ENCODE measurements at regions of chr14 and their contacts with region 1.

Region 1: GRCh38 chr14:67487937-67488893 is at the start of gene TMEM229B:
- DNase-seq: peak; percentile 84
- ATAC-seq: peak; percentile 85
- H3K4me3 Mint-ChIP-seq: peak within 1 kb of the TSS; percentile 88
- H3K27ac Mint-ChIP-seq: peak within 1 kb of the TSS; percentile 99
- H3K4me1 Mint-ChIP-seq: peaks cover 85% of the 10 kb centered on the region
- H3K27me3 Mint-ChIP-seq: no peaks in the 10 kb centered on the region
- CTCF ChIP-seq: no peak
- total RNA-seq, gene TMEM229B: 3.3 and 3.7 TPM in 2 replicates

Region 2: DNA sequence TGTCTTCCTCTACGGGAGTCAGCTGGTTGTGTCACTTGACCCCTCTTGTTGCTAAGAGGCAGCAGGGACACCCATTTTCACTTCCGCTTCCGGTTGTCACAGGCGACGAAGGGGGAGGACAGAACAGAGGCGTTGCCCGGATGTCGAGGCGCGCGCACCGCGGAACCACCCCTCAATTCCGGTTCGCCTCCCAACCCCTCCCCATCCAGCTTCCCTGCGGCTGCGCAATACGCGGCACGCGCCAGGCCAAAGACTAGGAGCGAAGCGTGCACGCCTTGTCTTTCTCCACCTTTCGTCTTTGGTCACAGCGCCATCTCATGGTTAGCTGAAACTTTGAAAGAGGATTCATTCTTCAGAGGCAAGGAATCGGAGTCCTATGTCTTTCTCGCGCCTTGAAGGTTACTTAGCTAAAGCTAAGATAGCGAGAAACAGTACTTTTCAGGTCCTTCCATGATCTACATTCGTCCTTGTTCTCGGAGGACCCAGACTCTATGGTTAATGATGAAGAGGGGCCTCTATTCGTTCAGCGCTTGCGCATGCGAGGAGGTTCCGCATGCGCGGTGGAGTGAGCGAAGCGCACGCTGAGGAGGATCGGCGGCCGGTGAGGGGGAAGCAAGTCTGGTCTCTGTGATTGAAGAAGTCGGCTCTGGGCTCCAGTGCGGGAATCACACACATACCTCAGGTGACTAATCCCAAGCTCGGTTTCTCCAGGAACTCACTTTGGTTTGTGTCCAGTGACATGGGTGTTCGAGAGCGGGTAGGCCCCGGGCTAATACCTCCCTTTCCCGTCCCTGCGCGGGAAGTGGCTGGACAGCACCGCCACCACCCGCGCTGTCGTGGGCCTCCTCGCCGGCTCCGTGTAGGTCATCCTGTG is 128.2 kb before region 1 on chr14 and contains the starts of genes ATP6V1D and EIF2S1:
- CTCF ChIA-PET with region 1: interaction called, 4 read pairs
- POLR2A ChIA-PET with region 1: interaction called, 7 read pairs
- intact Hi-C with region 1: loop called (anchors 1 kb)
- DNase-seq: peak; percentile 97
- ATAC-seq: peak; percentile 91
- H3K4me3 Mint-ChIP-seq: peak within 1 kb of the TSS; percentile 99
- H3K27ac Mint-ChIP-seq: peak within 1 kb of the TSS; percentile 97
- H3K4me1 Mint-ChIP-seq: peaks cover 60% of the 10 kb centered on the region
- H3K27me3 Mint-ChIP-seq: no peaks in the 10 kb centered on the region
- CTCF ChIP-seq: peak; percentile 95
- total RNA-seq, gene ATP6V1D: 27.8 and 29.4 TPM in 2 replicates
- total RNA-seq, gene EIF2S1: 84.4 and 96.7 TPM in 2 replicates

Region 3: DNA sequence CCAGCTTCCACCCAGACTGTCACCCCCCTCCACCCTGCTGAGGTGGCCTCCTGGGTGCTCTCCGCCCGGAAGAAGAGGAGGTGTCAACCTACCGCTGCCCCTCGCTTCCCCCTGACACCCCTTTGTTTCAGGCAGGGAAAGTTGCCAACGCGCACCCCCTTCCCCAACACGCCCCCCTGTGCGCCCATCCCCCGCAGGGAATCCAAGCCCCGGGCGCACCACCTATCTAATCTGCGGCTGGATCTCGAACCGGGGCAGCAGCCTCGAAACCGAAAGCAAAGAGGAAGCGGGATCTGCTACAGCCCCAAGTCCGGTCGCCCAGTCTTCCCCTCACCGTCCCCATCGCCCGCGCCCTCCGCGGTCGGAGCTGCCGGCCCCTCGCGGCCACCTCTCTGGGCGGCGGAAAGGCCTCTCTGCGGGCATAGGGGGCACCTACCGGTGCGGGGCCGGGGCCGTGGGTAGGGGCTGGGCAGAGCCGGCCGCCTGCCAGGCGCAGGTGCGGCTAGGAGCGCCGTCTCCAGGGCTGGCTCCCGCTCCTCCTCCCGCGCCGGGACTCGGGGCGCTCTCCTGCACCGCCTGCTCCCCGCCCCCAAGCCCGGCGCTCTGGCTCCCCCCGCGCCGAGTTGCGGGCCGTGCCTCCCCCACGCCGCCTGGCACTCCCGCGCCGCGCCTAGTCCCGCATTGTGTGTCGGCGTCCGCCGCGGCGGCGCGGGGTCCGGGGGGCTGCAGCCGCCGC is 26.6 kb after region 1 on chr14:
- CTCF ChIA-PET with region 1: interaction called, 10 read pairs
- POLR2A ChIA-PET with region 1: interaction called, 15 read pairs
- intact Hi-C with region 1: loop called (anchors 1 kb)
- DNase-seq: peak; percentile 53
- ATAC-seq: peak; percentile 53
- H3K4me3 Mint-ChIP-seq: peak overlapping the region; percentile 88
- H3K27ac Mint-ChIP-seq: peak overlapping the region; percentile 85
- H3K4me1 Mint-ChIP-seq: peaks cover 41% of the 10 kb centered on the region
- H3K27me3 Mint-ChIP-seq: no peaks in the 10 kb centered on the region
- CTCF ChIP-seq: no peak

Region 4: DNA sequence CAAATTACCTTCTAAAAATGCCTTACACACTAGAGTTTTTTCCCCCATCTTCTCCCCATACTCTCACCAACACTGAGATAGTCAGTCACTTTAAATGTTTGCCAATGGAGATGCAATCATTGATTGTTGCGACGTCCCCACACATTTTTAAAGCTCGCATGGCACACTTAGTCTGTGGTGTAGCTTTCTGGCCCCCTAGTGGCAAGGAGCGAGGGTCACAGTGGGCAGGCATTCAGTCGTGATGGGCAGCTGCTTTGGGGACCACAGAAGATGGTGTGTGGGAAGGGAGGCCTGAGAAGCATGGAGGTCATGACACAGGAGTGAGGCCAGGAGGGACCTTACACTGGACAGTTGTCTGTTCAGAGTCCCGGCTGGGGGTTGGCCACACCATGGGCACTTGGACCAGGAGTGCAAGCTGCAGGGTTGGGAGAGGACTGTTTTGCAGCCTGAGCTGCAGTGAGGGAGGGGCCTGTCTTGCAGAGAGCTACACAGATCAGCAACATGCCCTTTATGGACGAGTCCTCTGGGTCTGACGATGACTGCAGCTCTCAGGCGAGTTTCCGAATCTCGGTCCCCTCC is 83.1 kb after region 1 on chr14:
- CTCF ChIA-PET with region 1: interaction called, 21 read pairs
- POLR2A ChIA-PET with region 1: interaction called, 5 read pairs
- intact Hi-C with region 1: no loop called
- DNase-seq: peak; percentile 55
- ATAC-seq: peak; percentile 86
- H3K4me3 Mint-ChIP-seq: no peak overlapping the region
- H3K27ac Mint-ChIP-seq: no peak overlapping the region
- H3K4me1 Mint-ChIP-seq: peaks cover 3% of the 10 kb centered on the region
- H3K27me3 Mint-ChIP-seq: peaks cover 8% of the 10 kb centered on the region
- CTCF ChIP-seq: no peak

Region 5: DNA sequence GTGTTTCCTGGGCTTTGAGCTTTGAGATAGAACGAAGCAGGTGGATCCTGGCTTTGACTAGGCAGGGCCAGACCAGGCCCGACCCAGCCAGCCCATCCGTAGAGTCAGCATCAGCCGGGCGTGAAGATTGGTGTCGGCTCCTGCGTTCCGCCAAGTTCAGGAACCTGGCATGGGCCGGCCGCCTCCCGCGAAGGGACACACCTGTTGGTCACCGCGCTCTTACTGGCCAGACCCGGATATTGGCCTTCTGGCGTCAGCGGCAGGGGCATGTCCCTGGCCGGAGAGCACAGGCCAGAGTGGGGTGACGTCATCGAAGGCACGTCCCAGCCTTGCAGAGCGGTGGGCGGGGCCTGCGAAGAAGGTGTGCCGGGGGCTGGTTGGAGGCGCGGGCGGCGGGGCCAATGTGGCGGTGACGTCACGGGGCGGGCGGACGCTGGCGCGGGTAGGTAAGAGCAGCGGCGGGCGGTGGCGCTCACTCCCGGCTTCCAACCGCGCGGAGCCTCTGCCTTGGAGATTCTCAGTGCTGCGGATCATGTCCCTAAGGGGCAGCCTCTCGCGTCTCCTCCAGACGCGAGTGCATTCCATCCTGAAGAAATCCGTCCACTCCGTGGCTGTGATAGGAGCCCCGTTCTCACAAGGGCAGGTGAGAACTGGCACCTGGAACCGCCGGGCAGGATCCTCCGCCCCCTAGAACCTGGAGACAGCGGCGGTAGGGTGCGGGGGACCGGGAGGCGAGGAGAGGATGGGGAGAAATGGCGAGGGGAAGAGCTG is 131.4 kb after region 1 on chr14 and contains the start of gene ARG2:
- CTCF ChIA-PET with region 1: no interaction called
- POLR2A ChIA-PET with region 1: no interaction called
- intact Hi-C with region 1: loop called (anchors 1 kb)
- DNase-seq: peak; percentile 95
- ATAC-seq: peak; percentile 94
- H3K4me3 Mint-ChIP-seq: peak within 1 kb of the TSS; percentile 88
- H3K27ac Mint-ChIP-seq: peak within 1 kb of the TSS; percentile 79
- H3K4me1 Mint-ChIP-seq: peaks cover 25% of the 10 kb centered on the region
- H3K27me3 Mint-ChIP-seq: no peaks in the 10 kb centered on the region
- CTCF ChIP-seq: no peak
- total RNA-seq, gene ARG2: 0.40 and 0.46 TPM in 2 replicates

Region 6: DNA sequence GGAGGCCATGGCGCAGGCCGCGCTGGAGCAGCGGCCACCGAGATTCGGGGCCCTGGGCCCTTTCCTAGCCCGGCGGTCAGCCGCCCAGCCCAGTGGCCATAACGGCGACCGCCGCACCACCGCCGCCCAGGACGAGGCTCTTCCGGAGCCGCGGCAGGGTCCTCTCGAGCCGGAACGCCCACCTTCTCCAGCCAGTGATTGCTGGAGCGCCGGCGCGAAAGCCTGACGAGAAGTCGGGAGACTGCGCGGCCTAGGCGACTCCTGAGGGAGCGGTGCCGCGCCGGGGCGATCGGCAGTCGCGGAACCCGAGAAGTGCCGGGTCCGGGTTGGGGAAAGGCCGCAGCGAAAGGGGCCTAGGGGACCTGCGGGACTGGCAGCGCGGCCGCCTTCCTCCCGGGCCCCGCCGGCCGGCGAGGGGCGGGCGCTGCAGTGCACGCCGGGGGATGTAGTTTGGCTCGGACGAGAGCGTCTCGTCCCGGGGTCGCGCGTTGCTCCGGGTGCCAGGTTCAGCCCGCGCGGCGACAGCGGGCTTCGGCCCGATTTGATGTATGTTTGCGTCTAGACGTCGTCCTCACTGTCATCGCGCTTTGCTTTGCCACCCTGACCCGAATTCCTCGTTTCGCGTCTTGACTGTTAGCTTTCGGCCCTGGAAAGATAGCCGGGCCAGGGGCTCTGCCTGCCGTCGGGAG is 186.4 kb after region 1 on chr14 and contains the start of gene VTI1B:
- CTCF ChIA-PET with region 1: no interaction called
- POLR2A ChIA-PET with region 1: no interaction called
- intact Hi-C with region 1: loop called (anchors 2 kb)
- DNase-seq: peak; percentile 86
- ATAC-seq: peak; percentile 93
- H3K4me3 Mint-ChIP-seq: peak within 1 kb of the TSS; percentile 89
- H3K27ac Mint-ChIP-seq: peak within 1 kb of the TSS; percentile 89
- H3K4me1 Mint-ChIP-seq: peaks cover 36% of the 10 kb centered on the region
- H3K27me3 Mint-ChIP-seq: no peaks in the 10 kb centered on the region
- CTCF ChIP-seq: no peak
- total RNA-seq, gene VTI1B: 76.3 and 78.9 TPM in 2 replicates

Region 7: GRCh38 chr14:67816326-67817002 is 328.2 kb after region 1 on chr14 and contains the start of gene ZFYVE26:
- CTCF ChIA-PET with region 1: no interaction called
- POLR2A ChIA-PET with region 1: interaction called, 3 read pairs
- intact Hi-C with region 1: loop called (anchors 1 kb)
- DNase-seq: peak; percentile 70
- ATAC-seq: peak; percentile 85
- H3K4me3 Mint-ChIP-seq: peak within 1 kb of the TSS; percentile 94
- H3K27ac Mint-ChIP-seq: peak within 1 kb of the TSS; percentile 95
- H3K4me1 Mint-ChIP-seq: peaks cover 63% of the 10 kb centered on the region
- H3K27me3 Mint-ChIP-seq: no peaks in the 10 kb centered on the region
- CTCF ChIP-seq: no peak
- total RNA-seq, gene ZFYVE26: 40.7 and 41.1 TPM in 2 replicates